ENCODE measurements at regions of chr15 and their contacts with region 1.

Region 1: DNA sequence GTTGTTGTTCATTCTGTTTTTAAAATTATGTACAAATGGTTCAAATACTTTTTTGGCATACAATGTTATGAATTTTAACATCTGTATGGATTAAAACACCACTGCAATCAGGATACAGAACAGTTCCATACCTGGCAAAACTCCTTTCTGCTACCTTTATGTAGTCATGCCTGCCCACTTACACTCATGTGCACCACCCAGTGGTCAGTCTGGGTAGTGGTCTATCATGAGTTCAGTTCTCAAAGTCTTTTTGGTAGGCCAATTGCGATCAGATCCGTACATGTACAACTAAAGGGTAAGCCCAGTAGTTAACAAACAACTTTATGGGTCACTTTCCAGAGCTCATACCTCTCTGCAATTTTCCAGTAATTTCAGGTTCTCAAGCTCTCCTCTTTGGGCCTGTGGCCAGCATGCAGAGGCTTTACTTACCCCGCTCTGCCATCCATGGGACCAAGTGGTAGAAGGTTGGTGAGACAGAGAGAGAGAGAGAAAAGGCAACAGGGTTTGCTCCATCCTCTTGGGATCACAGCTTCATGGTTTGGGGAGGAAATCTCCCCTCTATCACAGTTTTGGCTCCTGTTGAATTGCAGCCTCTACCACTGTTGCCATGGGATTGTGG is 63.9 kb upstream of the FAM98B start:
- DNase-seq: peak; percentile 20
- ATAC-seq: peak; percentile 67
- H3K4me3 Mint-ChIP-seq: no peak overlapping the region
- H3K27ac Mint-ChIP-seq: no peak overlapping the region
- H3K4me1 Mint-ChIP-seq: no peaks in the 10 kb centered on the region
- H3K27me3 Mint-ChIP-seq: peaks cover 13% of the 10 kb centered on the region
- CTCF ChIP-seq: peak; percentile 38

Region 2: GRCh38 chr15:37995461-37996347 is 394.3 kb before region 1 on chr15:
- CTCF ChIA-PET with region 1: interaction called, 6 read pairs
- POLR2A ChIA-PET with region 1: no interaction called
- intact Hi-C with region 1: loop called (anchors 1 kb)
- DNase-seq: no peak
- ATAC-seq: peak; percentile 47
- H3K4me3 Mint-ChIP-seq: no peak overlapping the region
- H3K27ac Mint-ChIP-seq: no peak overlapping the region
- H3K4me1 Mint-ChIP-seq: no peaks in the 10 kb centered on the region
- H3K27me3 Mint-ChIP-seq: peaks cover 16% of the 10 kb centered on the region
- CTCF ChIP-seq: no peak

Region 3: DNA sequence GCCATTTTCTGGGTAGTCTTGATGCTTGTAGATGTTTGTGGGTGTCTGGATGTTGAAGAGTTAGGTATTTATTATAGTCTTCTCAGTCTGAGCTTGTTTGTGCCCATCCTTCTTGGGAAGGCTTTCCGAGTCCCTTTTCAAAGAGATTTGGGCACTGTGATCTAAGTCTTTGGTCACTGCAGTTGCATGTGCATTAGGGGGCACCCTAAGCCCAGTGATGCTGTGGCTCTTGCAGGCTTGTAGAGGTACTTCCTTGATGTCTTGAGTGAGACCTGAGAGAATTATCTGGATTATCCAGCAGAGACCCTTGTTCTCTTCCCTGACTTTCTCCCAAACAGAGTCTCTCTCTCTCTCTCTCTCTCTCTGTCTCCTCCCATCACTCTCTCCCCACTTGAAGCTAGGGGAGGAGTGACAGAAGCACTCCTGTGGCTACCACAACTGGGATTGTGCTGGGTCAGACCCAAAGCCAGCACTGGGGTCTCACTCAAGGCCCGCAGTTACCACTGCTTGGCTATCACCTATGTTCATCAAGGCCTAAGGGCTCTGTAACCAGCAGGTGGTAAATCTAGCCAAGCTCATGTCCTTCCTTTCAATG is 387.1 kb before region 1 on chr15:
- CTCF ChIA-PET with region 1: interaction called, 6 read pairs
- POLR2A ChIA-PET with region 1: no interaction called
- intact Hi-C with region 1: loop called (anchors 1 kb)
- DNase-seq: no peak
- ATAC-seq: no peak
- H3K4me3 Mint-ChIP-seq: no peak overlapping the region
- H3K27ac Mint-ChIP-seq: no peak overlapping the region
- H3K4me1 Mint-ChIP-seq: no peaks in the 10 kb centered on the region
- H3K27me3 Mint-ChIP-seq: peaks cover 6% of the 10 kb centered on the region
- CTCF ChIP-seq: no peak

Region 4: GRCh38 chr15:38424101-38424552 is 34.1 kb after region 1 on chr15:
- CTCF ChIA-PET with region 1: no interaction called
- POLR2A ChIA-PET with region 1: no interaction called
- intact Hi-C with region 1: no loop called
- DNase-seq: no peak
- ATAC-seq: no peak
- H3K4me3 Mint-ChIP-seq: no peak overlapping the region
- H3K27ac Mint-ChIP-seq: no peak overlapping the region
- H3K4me1 Mint-ChIP-seq: no peaks in the 10 kb centered on the region
- H3K27me3 Mint-ChIP-seq: peaks cover 12% of the 10 kb centered on the region
- CTCF ChIP-seq: no peak